BJ (cell line): ENCODE measurements at regions of chr11 and their contacts with region 1.

Region 1: DNA sequence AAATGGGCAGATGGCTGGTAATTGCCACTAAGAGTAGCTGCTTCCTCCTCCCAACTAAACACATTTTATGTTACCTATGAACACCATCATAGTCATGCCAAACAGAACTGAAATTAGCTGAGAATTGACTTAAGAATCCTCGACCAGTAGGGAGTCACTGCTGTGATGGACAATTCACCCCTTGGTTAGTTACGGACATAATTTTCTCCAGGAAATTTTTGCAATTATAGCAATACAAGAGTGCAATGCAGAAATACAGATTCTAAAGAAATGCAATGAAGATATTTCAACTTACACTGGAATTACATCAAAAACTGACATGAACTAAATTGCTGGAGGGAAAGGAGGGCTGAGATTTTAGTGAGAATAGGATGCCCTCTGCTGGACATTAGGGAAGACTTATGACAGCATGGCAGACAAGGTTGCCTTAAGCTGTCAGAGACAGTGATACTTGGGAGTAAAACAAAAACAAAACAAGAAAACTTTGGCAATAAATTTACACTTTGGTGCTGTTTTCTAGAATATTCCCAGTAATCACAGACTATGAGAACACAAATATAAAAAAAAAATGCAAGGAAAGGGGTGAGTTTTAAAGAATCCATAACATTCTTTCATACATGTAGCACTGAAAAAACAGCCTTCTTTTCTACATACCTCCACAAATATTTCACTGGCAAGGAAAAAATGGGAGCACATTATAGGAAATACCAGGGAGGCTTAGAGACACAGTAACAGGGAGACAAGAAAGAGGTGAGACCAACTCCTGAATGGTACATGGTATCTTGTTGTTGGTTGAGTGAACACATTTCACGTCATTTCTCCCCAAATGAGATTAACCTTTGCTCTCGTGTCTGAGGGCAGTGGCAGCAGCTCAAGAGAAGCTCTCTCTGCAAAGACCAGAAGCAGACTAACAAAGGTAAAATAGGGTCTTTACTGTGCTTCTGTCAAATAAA is 11.2 kb upstream of the PPP2R1B start:
- DNase-seq: no peak
- H3K4me3 ChIP-seq: no peak overlapping the region
- H3K27me3 ChIP-seq: no peaks in the 10 kb centered on the region
- CTCF ChIP-seq: peak; percentile 74

Region 2: DNA sequence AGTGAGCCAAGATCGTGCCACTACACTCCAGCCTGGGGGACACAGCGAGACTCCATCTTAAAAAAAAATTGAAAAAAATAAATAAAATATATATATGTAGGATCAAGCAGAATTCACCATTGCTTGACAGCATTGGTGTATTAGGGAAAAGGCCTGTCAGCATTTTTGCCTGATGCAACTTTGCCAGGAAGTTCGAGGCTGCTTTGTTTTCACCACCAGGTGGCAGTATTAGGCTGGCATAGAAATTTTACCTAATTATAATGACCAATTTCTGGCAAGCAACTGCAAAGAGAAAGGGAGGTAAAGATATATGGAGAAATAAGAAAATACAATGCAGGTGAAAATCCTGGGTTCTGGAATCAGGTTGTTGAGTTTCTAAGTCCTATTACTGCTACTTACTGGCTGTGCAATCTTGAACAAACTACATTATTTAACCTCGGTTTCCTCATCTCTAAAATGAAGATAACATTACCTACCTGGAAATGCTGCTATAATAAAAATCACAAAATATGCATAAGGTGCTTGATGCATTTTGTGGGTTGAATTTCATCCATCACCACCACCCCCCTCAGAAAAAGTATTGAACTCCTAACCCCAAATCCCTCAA is 212.2 kb before region 1 on chr11:
- CTCF ChIA-PET with region 1: interaction called, 16 read pairs
- POLR2A ChIA-PET with region 1: no interaction called
- DNase-seq: no peak
- H3K4me3 ChIP-seq: no peak overlapping the region
- H3K27me3 ChIP-seq: no peaks in the 10 kb centered on the region
- CTCF ChIP-seq: peak; percentile 84

Region 3: GRCh38 chr11:111586388-111586831 is 191.0 kb before region 1 on chr11:
- CTCF ChIA-PET with region 1: interaction called, 22 read pairs
- POLR2A ChIA-PET with region 1: no interaction called
- DNase-seq: no peak
- H3K4me3 ChIP-seq: no peak overlapping the region
- H3K27me3 ChIP-seq: no peaks in the 10 kb centered on the region
- CTCF ChIP-seq: peak; percentile 70

Region 4: DNA sequence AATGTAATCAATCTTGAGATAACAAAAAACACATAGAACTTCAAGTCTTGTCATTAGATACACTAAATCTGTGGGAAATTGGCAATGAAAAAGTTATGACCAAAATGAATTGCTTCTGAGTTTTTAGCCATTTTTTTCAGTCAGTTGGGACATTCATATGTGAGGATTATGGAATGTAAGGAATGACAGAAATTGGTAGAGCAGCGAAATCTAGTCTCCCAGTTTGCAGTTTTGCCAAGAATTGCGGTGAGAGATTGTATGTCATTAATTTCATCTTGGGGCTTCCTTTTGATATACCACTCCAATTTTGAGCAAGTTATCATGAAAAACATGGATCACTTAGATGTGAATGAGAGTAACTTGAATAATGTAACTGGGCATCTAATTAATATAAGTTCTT is 125.2 kb before region 1 on chr11:
- CTCF ChIA-PET with region 1: no interaction called
- POLR2A ChIA-PET with region 1: no interaction called
- DNase-seq: no peak
- H3K4me3 ChIP-seq: no peak overlapping the region
- H3K27me3 ChIP-seq: no peaks in the 10 kb centered on the region
- CTCF ChIP-seq: no peak

Region 5: DNA sequence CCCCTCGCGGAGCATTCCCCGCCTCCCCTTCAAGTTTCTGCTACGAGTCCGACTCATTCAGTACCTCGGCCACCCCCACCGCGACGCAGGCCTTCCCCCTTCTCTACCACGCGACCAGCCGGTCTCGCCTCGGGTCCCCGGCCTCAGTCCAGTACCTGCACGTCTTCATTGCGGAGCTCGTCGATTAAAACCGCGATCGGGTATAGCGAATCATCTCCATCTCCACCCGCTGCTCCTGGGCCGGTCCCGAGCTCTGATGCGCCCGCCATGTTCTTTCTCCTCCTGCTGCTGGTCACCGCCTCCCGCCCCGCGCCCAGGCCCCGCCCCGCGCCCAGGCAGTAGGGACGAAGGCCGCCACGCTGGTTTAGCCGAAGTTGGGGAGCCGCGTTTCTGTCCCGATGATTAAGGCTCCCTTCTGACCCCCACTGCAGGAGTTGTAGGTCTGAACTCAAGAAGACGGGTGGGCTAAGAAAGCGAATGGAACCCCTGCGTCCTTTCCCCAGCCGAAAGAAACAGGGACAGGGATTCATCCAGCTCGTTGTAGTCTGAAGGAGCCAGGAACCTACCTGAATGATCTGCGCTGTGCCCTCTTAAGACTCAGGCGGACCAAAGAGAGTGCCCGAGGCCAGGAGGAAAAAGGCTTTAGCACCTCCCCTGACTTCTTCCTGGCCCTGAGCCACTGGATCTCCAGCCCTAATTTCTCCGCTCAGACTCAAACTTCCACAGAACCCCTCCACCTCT is 11.1 kb before region 1 on chr11 and contains the start of gene PPP2R1B:
- CTCF ChIA-PET with region 1: interaction called, 30 read pairs
- POLR2A ChIA-PET with region 1: no interaction called
- DNase-seq: no peak
- H3K4me3 ChIP-seq: peak within 1 kb of the TSS; percentile 81
- H3K27me3 ChIP-seq: no peaks in the 10 kb centered on the region
- CTCF ChIP-seq: no peak
- polyA plus RNA-seq, gene PPP2R1B: 20.7 and 32.5 TPM in 2 replicates

Region 6: DNA sequence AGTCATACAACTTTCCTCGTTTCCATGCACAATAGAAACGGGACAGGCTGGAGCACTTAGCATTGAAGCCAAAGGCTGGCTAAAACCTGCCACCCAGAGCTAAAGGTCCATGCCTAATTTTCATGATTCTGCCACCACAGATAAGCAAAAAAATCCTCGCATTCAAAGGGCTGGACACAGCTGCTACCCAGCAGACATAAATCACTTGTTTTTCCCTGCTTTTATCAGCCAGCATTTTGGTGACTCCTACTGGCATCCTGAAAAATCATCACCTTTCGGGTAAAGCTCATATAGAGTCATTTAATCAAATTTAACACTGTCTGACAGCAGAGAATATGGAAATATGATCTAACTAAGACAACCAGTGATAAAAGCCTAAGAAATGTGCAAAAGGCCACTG is 56.2 kb after region 1 on chr11:
- CTCF ChIA-PET with region 1: interaction called, 13 read pairs
- POLR2A ChIA-PET with region 1: no interaction called
- DNase-seq: no peak
- H3K4me3 ChIP-seq: no peak overlapping the region
- H3K27me3 ChIP-seq: no peaks in the 10 kb centered on the region
- CTCF ChIP-seq: no peak

Region 7: GRCh38 chr11:111841370-111842053 is 64.1 kb after region 1 on chr11:
- CTCF ChIA-PET with region 1: interaction called, 28 read pairs
- POLR2A ChIA-PET with region 1: no interaction called
- DNase-seq: peak; percentile 86
- H3K4me3 ChIP-seq: no peak overlapping the region
- H3K27me3 ChIP-seq: no peaks in the 10 kb centered on the region
- CTCF ChIP-seq: peak; percentile 76